ENCODE measurements at regions of chr22 and their contacts with region 1.

Region 1: GRCh38 chr22:40950962-40951794 is at the start of gene RBX1:
- DNase-seq: peak; percentile 99

Region 2: GRCh38 chr22:40808018-40808841 is 142.9 kb before region 1 on chr22:
- CTCF ChIA-PET with region 1: no interaction called
- POLR2A ChIA-PET with region 1: no interaction called
- DNase-seq: no peak

Region 3: DNA sequence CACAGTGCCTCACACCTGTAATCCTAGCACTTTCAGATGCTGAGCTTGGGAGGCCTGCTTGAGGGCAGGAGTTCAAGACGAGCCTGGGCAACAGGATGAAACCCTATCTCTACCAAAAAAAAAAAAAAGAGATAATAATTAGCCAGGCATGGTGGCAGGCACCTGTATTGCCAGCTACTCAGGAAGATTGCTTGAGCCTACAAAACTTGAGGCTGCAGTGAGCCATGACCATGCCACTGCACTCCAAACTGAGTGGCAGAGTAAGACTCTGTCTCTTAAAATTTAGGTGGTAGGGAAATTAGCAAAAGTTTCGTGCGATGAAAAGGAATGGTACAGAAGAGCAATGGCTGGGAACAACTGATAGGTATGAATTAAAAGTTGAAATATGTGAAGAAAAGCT is 112.7 kb before region 1 on chr22:
- CTCF ChIA-PET with region 1: no interaction called
- POLR2A ChIA-PET with region 1: no interaction called
- DNase-seq: no peak

Region 4: GRCh38 chr22:40908895-40909294 is 42.3 kb before region 1 on chr22:
- CTCF ChIA-PET with region 1: no interaction called
- POLR2A ChIA-PET with region 1: no interaction called
- DNase-seq: no peak

Region 5: GRCh38 chr22:40922484-40923303 is 28.5 kb before region 1 on chr22:
- CTCF ChIA-PET with region 1: no interaction called
- POLR2A ChIA-PET with region 1: interaction called, 21 read pairs
- DNase-seq: peak; percentile 63

Region 6: GRCh38 chr22:40965936-40966725 is 15.0 kb after region 1 on chr22:
- CTCF ChIA-PET with region 1: no interaction called
- POLR2A ChIA-PET with region 1: interaction called, 13 read pairs
- DNase-seq: no peak

Region 7: GRCh38 chr22:41048791-41049717 is 97.9 kb after region 1 on chr22:
- CTCF ChIA-PET with region 1: no interaction called
- POLR2A ChIA-PET with region 1: interaction called, 14 read pairs
- DNase-seq: peak; percentile 65

Region 8: GRCh38 chr22:41096841-41097240 is 145.7 kb after region 1 on chr22:
- CTCF ChIA-PET with region 1: no interaction called
- POLR2A ChIA-PET with region 1: interaction called, 55 read pairs
- DNase-seq: no peak

Measured in HEK293T (cell line).